Activated CD8-positive, alpha-beta memory T cell treated with anti-CD3 and anti-CD28 coated beads, Interleukin-2, amount 10 ng/mL, durations not matched to agents 7 days and 5 days (primary cell): ENCODE measurements at regions of chr1 and their contacts with region 1.

Region 1: DNA sequence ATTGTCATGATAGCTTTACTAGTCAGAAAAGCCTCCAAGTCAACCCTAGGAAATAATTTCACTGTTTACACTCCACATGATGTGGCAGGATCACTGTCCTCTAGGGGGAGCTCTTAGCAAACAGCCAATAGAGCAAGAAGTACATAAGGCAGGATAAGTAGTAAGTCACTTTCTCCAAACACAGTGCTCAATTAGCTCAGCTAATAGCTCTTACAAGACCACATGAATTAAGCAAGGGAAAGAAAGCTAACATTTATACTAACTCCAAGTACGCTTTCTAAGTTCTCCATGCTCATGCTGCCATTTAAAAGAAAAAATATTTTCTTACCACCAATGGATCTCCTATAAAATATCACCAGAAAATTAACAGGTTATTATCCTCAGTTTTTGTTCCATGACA is 66.9 kb upstream of the LRIF1 start:
- DNase-seq: peak; percentile 73
- ATAC-seq: peak; percentile 70
- H3K4me3 Mint-ChIP-seq: no peak overlapping the region
- H3K27ac Mint-ChIP-seq: no peak overlapping the region
- H3K4me1 Mint-ChIP-seq: no peaks in the 10 kb centered on the region
- H3K27me3 Mint-ChIP-seq: peaks cover 28% of the 10 kb centered on the region

Region 2: GRCh38 chr1:111015225-111015624 is 15.4 kb before region 1 on chr1:
- CTCF ChIA-PET with region 1: interaction called, 15 read pairs
- DNase-seq: no peak
- ATAC-seq: no peak
- H3K4me3 Mint-ChIP-seq: no peak overlapping the region
- H3K27ac Mint-ChIP-seq: no peak overlapping the region
- H3K4me1 Mint-ChIP-seq: no peaks in the 10 kb centered on the region
- H3K27me3 Mint-ChIP-seq: peaks cover 46% of the 10 kb centered on the region

Region 3: GRCh38 chr1:111045033-111045722 is 14.6 kb after region 1 on chr1:
- CTCF ChIA-PET with region 1: interaction called, 13 read pairs
- DNase-seq: no peak
- ATAC-seq: no peak
- H3K4me3 Mint-ChIP-seq: no peak overlapping the region
- H3K27ac Mint-ChIP-seq: no peak overlapping the region
- H3K4me1 Mint-ChIP-seq: peaks cover 1% of the 10 kb centered on the region
- H3K27me3 Mint-ChIP-seq: peaks cover 36% of the 10 kb centered on the region

Region 4: GRCh38 chr1:111334169-111334568 is 303.6 kb after region 1 on chr1:
- CTCF ChIA-PET with region 1: interaction called, 18 read pairs
- DNase-seq: peak; percentile 62
- ATAC-seq: peak; percentile 68
- H3K4me3 Mint-ChIP-seq: no peak overlapping the region
- H3K27ac Mint-ChIP-seq: no peak overlapping the region
- H3K4me1 Mint-ChIP-seq: peaks cover 12% of the 10 kb centered on the region
- H3K27me3 Mint-ChIP-seq: no peaks in the 10 kb centered on the region

Region 5: GRCh38 chr1:111399792-111400610 is 369.4 kb after region 1 on chr1:
- CTCF ChIA-PET with region 1: interaction called, 19 read pairs
- DNase-seq: peak; percentile 56
- ATAC-seq: no peak
- H3K4me3 Mint-ChIP-seq: no peak overlapping the region
- H3K27ac Mint-ChIP-seq: no peak overlapping the region
- H3K4me1 Mint-ChIP-seq: peaks cover 8% of the 10 kb centered on the region
- H3K27me3 Mint-ChIP-seq: peaks cover 58% of the 10 kb centered on the region